ENCODE measurements at regions of chr9 and their contacts with region 1.

Region 1: DNA sequence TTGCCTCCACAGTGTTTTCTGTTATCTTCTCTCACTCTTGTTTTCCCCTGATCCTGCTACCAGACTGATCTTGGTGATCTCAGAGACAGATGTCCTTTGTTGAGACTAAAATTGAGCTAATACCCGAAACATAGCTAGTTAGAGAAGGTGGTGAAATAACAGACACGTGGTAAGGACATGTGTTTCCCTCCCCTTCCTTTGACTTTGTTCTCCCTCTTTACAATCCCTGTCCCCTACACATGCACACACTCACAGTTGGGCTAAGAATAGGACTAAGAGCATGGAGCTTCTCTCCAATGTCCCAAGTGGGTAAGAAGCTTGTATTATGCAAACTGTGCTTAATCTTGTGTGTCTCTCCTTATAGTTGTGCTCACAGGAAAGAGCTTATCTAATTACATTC is 1603.0 kb upstream of the C9orf72 start:
- DNase-seq: no peak
- ATAC-seq: no peak
- H3K4me3 ChIP-seq: no peak overlapping the region
- H3K4me3 Mint-ChIP-seq: no peak overlapping the region
- H3K27ac ChIP-seq: no peak overlapping the region
- H3K27ac Mint-ChIP-seq: no peak overlapping the region
- H3K4me1 ChIP-seq: no peaks in the 10 kb centered on the region
- H3K4me1 Mint-ChIP-seq: peaks cover 9 to 26% of the 10 kb centered on the region in 2 donors
- H3K27me3 ChIP-seq: no peaks in the 10 kb centered on the region
- H3K27me3 Mint-ChIP-seq: no peaks in the 10 kb centered on the region
- CTCF ChIP-seq: no peak

Region 2: GRCh38 chr9:28951944-28952343 is 224.3 kb before region 1 on chr9:
- intact Hi-C with region 1: no loop called
- DNase-seq: no peak
- ATAC-seq: no peak
- H3K4me3 ChIP-seq: no peak overlapping the region
- H3K4me3 Mint-ChIP-seq: no peak overlapping the region
- H3K27ac ChIP-seq: no peak overlapping the region
- H3K27ac Mint-ChIP-seq: no peak overlapping the region
- H3K4me1 ChIP-seq: no peaks in the 10 kb centered on the region
- H3K4me1 Mint-ChIP-seq: peaks cover 0 to 23% of the 10 kb centered on the region in 2 donors
- H3K27me3 ChIP-seq: no peaks in the 10 kb centered on the region
- H3K27me3 Mint-ChIP-seq: no peaks in the 10 kb centered on the region
- CTCF ChIP-seq: no peak

Region 3: GRCh38 chr9:29160763-29161353 is 15.4 kb before region 1 on chr9:
- intact Hi-C with region 1: loop called (anchors 1 kb)
- DNase-seq: no peak
- ATAC-seq: no peak
- H3K4me3 ChIP-seq: no peak overlapping the region
- H3K4me3 Mint-ChIP-seq: no peak overlapping the region
- H3K27ac ChIP-seq: no peak overlapping the region
- H3K27ac Mint-ChIP-seq: no peak overlapping the region
- H3K4me1 ChIP-seq: no peaks in the 10 kb centered on the region
- H3K4me1 Mint-ChIP-seq: peaks cover 6 to 52% of the 10 kb centered on the region in 2 donors
- H3K27me3 ChIP-seq: no peaks in the 10 kb centered on the region
- H3K27me3 Mint-ChIP-seq: no peaks in the 10 kb centered on the region
- CTCF ChIP-seq: no peak

Region 4: DNA sequence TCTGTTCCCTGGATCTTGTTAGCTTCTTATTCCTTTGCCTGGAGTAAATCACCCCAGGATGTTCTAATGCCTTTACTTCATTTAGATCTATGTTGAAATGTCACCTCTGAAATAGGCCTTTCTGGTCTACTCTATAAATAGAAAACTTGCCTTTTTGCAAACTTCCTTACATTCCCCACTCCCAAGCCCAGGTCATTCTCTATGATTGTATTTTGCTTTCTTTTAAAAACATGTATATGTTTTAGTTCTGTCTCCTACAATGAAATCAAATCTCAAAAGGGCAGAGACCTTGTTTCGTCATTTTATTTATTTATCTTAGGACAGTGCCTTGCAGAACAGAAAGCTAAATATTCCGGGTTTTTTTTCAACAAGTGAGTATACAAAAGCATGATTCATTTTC is 54.7 kb after region 1 on chr9:
- intact Hi-C with region 1: no loop called
- DNase-seq: no peak
- ATAC-seq: no peak
- H3K4me3 ChIP-seq: no peak overlapping the region
- H3K4me3 Mint-ChIP-seq: no peak overlapping the region
- H3K27ac ChIP-seq: no peak overlapping the region
- H3K27ac Mint-ChIP-seq: no peak overlapping the region
- H3K4me1 ChIP-seq: no peaks in the 10 kb centered on the region
- H3K4me1 Mint-ChIP-seq: no peaks in the 10 kb centered on the region
- H3K27me3 ChIP-seq: no peaks in the 10 kb centered on the region
- H3K27me3 Mint-ChIP-seq: no peaks in the 10 kb centered on the region
- CTCF ChIP-seq: no peak

Region 5: DNA sequence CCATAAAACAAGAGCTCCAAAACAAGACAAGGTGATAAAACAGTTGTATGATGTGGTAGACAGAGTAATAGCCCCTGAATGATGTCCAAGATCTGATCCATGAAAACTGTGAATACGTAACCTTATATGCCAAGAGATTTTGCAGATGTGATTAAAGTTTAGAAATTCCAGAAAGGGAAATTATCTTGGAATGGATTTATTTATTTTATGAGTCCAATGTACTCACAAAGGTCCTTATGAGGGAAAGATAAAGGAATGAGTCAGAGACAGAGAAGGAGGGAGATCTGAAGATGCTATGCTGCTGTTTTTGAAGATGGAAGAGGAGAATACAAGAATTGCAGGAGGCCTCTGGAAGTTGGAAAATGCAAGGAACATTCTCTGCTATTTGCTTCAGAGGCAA is 172.8 kb after region 1 on chr9:
- intact Hi-C with region 1: no loop called
- DNase-seq: no peak
- ATAC-seq: no peak
- H3K4me3 ChIP-seq: no peak overlapping the region
- H3K4me3 Mint-ChIP-seq: no peak overlapping the region
- H3K27ac ChIP-seq: no peak overlapping the region
- H3K27ac Mint-ChIP-seq: no peak overlapping the region
- H3K4me1 ChIP-seq: no peaks in the 10 kb centered on the region
- H3K4me1 Mint-ChIP-seq: no peaks in the 10 kb centered on the region
- H3K27me3 ChIP-seq: no peaks in the 10 kb centered on the region
- H3K27me3 Mint-ChIP-seq: no peaks in the 10 kb centered on the region
- CTCF ChIP-seq: no peak

Region 6: GRCh38 chr9:29613773-29614172 is 437.5 kb after region 1 on chr9:
- intact Hi-C with region 1: no loop called
- DNase-seq: no peak
- ATAC-seq: no peak
- H3K4me3 ChIP-seq: no peak overlapping the region
- H3K4me3 Mint-ChIP-seq: no peak overlapping the region
- H3K27ac ChIP-seq: no peak overlapping the region
- H3K27ac Mint-ChIP-seq: no peak overlapping the region
- H3K4me1 ChIP-seq: no peaks in the 10 kb centered on the region
- H3K4me1 Mint-ChIP-seq: no peaks in the 10 kb centered on the region
- H3K27me3 ChIP-seq: no peaks in the 10 kb centered on the region
- H3K27me3 Mint-ChIP-seq: no peaks in the 10 kb centered on the region
- CTCF ChIP-seq: no peak

Measured in natural killer cell (primary cell).